ENCODE measurements at regions of chr17 and their contacts with region 1.

Region 1: GRCh38 chr17:48711102-48711501 is 11.2 kb downstream of the PRAC1 start:
- DNase-seq: no peak
- ATAC-seq: no peak
- H3K4me3 ChIP-seq: no peak overlapping the region
- H3K27ac ChIP-seq: no peak overlapping the region
- H3K4me1 ChIP-seq: peaks cover 4% of the 10 kb centered on the region
- H3K27me3 ChIP-seq: no peaks in the 10 kb centered on the region
- CTCF ChIP-seq: no peak

Region 2: DNA sequence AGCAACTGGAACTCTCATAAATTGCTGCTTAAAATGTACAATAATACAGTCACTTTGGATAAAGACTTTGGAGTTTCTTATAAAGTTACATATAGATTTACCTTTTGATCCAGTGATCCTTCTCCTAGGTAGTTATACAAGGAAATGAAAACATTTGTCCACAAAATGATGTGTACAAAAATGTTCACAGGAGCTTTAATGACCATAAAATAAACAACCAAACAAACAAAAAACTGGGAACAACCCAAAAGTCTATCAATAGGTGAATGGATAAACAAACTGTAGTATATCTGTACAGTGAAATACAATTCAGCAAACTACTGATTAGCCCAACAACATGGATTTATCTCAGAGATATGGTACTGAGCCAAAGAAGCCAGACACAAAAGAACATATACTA is 68.3 kb after region 1 on chr17:
- CTCF ChIA-PET with region 1: no interaction called
- POLR2A ChIA-PET with region 1: interaction called, 29 read pairs
- intact Hi-C with region 1: no loop called
- DNase-seq: no peak
- ATAC-seq: no peak
- H3K4me3 ChIP-seq: no peak overlapping the region
- H3K27ac ChIP-seq: no peak overlapping the region
- H3K4me1 ChIP-seq: no peaks in the 10 kb centered on the region
- H3K27me3 ChIP-seq: no peaks in the 10 kb centered on the region
- CTCF ChIP-seq: no peak

Region 3: DNA sequence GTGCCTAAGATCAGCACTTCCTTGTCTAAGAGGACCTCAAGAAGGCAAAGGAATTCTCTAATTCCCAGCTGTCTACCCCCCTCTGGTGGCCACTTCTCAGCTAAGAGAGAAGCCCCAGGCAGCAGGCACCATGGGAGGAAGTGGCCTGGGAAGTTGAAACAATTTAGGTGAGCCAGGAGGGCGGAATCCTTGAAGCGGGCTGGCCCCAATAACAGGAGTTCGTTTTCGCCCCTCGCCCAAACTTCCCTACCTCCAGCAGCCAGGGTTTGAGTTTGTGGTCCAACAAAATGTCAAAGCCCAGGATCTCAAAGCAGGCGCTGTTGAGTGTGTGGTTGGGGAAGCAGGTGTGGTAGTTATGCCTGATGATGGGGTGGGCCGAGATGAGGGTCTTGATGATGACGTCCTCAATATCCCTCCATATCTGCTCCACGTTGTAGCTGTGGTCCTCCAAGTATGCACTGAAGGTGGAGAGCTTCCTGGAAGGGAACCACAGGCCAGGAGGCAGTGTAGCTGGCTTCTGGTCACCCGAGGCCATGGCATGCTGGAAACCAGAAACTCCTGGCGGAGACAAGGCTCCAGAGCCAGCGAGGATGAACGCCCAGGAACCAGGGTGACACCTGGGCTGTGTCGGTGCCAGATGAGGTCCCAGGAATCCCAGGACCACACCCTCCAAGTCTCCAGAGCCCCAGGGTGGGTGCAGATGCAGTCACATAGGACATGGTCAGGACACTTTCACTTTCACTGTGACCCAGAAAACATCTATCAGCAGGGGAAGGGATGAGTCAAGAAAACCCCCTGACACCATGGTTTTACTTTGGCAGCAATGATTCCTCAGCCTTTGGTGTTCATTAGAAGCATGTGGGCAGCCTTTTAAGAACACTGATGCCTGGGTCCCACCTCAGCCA is 80.3 kb after region 1 on chr17:
- CTCF ChIA-PET with region 1: no interaction called
- POLR2A ChIA-PET with region 1: no interaction called
- intact Hi-C with region 1: no loop called
- DNase-seq: peak; percentile 99
- ATAC-seq: peak; percentile 92
- H3K4me3 ChIP-seq: peak overlapping the region; percentile 19; the same call in 1 of the 2 replicates
- H3K27ac ChIP-seq: no peak overlapping the region
- H3K4me1 ChIP-seq: peaks cover 30% of the 10 kb centered on the region
- H3K27me3 ChIP-seq: no peaks in the 10 kb centered on the region
- CTCF ChIP-seq: peak; percentile 98

Measured in PC-3 (cell line).